ENCODE measurements at regions of chr5 and their contacts with region 1.

Region 1: DNA sequence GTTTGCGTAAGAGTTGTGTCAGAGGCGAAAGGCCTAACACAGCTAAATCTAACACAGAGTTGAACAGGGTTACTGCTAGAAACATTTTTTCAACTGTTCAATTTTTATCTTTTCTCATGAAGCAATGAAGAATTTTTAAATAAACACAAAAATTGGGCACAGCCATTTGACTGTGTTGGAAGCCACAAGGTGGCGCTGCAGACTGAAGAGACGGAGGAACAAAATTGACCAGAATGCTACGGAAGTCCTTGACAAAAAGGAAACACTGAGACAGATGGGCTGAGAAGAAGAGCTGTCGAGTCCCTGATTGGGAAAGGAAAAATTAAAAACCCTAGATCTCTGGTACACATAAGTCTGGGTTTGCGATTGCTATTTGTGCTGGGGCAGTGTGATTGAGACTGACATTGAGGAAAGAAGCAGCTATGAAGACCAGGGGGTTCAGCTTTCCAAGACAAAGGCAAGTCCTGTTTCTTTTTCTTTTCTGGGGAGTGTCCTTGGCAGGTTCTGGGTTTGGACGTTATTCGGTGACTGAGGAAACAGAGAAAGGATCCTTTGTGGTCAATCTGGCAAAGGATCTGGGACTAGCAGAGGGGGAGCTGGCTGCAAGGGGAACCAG is at the start of gene PCDHB9:
- DNase-seq: peak in 1 of 2 experiments; percentile 80
- H3K4me3 ChIP-seq: peak within 1 kb of the TSS in 2 of 4 experiments; percentile 11 to 27; a peak in 1 of 8 replicates
- H3K27ac ChIP-seq: no peak within 1 kb of the TSS
- H3K4me1 ChIP-seq: 0 out of 7 replicates have a peak, but pooled peaks cover 0 to 2% (median 0%) of the 10 kb centered on the region in 4 experiments
- H3K27me3 ChIP-seq: no peaks in the 10 kb centered on the region
- CTCF ChIP-seq: peak; percentile 53 to 83 (median 81)
- EP300 ChIP-seq: no peak
- POLR2A ChIP-seq: no peak
- RAD21 ChIP-seq: peak; percentile 52 to 61
- total RNA-seq, gene PCDHB9: 1.6 and 3.8 TPM in 2 replicates

Region 2: DNA sequence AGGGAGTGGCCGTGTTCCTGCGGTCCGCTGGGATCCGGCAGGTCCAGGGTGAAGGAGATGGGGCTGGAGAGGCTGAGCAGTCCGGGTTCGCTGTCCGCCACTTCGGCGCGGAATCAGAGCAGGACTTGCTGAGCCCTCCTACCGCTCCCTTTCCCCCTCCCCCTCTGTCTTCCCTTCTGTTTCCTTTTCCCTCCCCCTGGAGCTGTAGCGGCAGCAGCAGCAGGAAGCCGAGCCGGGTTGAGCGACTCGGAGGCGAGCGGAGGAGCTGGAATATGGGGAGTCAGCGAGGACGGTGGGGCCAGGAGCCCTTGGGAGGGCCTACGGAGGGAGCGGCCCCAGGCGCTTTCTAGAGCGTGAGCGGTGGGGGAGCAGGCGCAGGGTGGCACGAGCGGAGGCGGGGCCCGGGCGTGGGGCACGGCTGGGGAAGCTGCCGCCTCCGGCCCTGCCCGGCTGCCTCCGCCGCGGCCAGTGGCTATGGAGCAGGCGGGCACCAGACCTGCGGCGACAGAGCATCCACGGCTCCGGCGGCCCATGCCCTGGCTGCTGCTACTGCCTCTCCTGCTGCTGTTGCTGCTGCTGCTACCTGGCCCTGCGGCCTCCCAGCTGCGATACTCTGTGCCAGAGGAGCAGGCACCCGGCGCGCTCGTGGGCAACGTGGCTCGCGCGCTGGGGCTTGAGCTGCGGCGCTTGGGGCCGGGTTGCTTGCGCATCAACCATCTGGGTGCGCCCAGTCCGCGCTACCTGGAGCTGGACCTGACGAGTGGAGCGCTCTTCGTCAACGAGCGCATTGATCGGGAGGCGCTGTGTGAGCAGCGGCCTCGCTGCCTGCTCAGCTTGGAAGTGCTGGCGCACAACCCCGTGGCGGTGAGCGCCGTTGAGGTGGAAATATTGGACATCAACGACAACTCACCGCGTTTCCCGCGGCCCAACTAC is 220.4 kb before region 1 on chr5 and contains the start of gene PCDHAC2:
- CTCF ChIA-PET with region 1: no interaction called
- POLR2A ChIA-PET with region 1: no interaction called
- DNase-seq: peak in 1 of 2 experiments; percentile 83
- H3K4me3 ChIP-seq: peak within 1 kb of the TSS; percentile 76 to 96 (median 92)
- H3K27ac ChIP-seq: no peak within 1 kb of the TSS
- H3K4me1 ChIP-seq: peaks cover 2 to 15% (median 7%) of the 10 kb centered on the region in 4 experiments; a peak in 5 of 7 replicates
- H3K27me3 ChIP-seq: peaks cover 2 to 27% (median 20%) of the 10 kb centered on the region in 4 experiments
- CTCF ChIP-seq: 0 out of 4 replicates have a peak, but pooled peaks of 1 of the 3 experiments have one; percentile 9
- EP300 ChIP-seq: peak in 1 of 2 experiments; percentile 44; a peak in 1 of 3 replicates
- POLR2A ChIP-seq: peak in 1 of 2 experiments; percentile 15; a peak in 1 of 3 replicates
- RAD21 ChIP-seq: 0 out of 4 replicates have a peak, but pooled peaks of 1 of the 2 experiments have one; percentile 3
- total RNA-seq, gene PCDHAC2: 3.7 and 4.9 TPM in 2 replicates

Region 3: DNA sequence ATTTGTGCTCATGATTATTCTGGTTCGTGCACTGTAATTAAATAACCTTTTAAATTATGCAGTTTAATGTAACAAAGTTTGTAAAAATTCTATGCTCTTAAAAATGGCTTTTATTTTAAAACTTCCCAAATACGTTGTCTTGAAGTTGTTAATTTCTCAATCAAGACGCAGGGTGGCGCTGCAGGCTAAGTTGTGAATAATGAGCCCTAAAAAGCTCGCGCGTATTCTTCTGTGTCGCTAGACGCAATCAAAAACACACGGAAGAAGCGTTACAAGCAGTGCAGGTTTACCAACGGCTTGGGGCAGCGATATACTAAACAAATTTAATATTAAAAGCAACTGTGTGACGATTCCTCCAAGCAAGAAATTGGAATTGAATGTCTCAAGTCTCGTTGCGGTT is 65.4 kb before region 1 on chr5 and contains the start of gene PCDHB4:
- CTCF ChIA-PET with region 1: interaction called, 22 read pairs
- POLR2A ChIA-PET with region 1: no interaction called
- DNase-seq: no peak
- H3K4me3 ChIP-seq: no peak within 1 kb of the TSS; a peak in 2 of 8 replicates
- H3K27ac ChIP-seq: no peak within 1 kb of the TSS
- H3K4me1 ChIP-seq: no peaks in the 10 kb centered on the region
- H3K27me3 ChIP-seq: no peaks in the 10 kb centered on the region
- CTCF ChIP-seq: peak; percentile 10 to 70 (median 63); a peak in 3 of 4 replicates
- EP300 ChIP-seq: no peak
- POLR2A ChIP-seq: no peak
- RAD21 ChIP-seq: peak; percentile 77 to 78
- total RNA-seq, gene PCDHB4: 1.4 and 1.5 TPM in 2 replicates

Region 4: DNA sequence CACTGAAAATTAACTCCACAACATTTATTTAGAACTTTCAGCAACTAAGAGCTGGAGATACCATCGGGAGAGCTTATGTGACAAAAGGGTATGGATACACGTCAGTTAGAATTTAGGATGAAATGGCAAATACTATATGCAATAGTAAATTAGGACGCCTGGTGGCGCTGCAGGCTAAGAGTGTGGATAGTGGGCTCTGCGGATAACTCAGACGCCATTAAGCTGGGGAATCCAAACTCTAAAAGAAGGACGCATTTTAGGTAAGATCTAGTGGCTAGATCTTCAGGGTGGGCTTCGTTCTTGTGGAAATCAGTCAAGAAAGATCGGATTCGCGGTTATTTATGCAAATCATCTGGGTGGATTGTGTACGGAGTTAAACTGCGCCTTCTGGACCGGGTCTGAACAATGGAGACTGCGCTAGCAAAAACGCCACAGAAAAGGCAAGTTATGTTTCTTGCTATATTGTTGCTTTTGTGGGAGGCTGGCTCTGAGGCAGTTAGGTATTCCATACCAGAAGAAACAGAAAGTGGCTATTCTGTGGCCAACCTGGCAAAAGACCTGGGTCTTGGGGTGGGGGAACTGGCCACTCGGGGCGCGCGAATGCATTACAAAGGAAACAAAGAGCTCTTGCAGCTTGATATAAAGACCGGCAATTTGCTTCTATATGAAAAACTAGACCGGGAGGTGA is 51.8 kb before region 1 on chr5 and contains the start of gene PCDHB5:
- CTCF ChIA-PET with region 1: interaction called, 21 read pairs
- POLR2A ChIA-PET with region 1: interaction called, 7 read pairs
- DNase-seq: peak in 1 of 2 experiments; percentile 86
- H3K4me3 ChIP-seq: peak within 1 kb of the TSS; percentile 60 to 98 (median 64)
- H3K27ac ChIP-seq: peak within 1 kb of the TSS; percentile 70
- H3K4me1 ChIP-seq: no peaks in the 10 kb centered on the region
- H3K27me3 ChIP-seq: no peaks in the 10 kb centered on the region
- CTCF ChIP-seq: peak; percentile 43 to 77 (median 72)
- EP300 ChIP-seq: no peak
- POLR2A ChIP-seq: peak in 1 of 2 experiments; percentile 49; a peak in 1 of 3 replicates
- RAD21 ChIP-seq: peak; percentile 77 to 79
- total RNA-seq, gene PCDHB5: 2.4 and 2.8 TPM in 2 replicates

Region 5: DNA sequence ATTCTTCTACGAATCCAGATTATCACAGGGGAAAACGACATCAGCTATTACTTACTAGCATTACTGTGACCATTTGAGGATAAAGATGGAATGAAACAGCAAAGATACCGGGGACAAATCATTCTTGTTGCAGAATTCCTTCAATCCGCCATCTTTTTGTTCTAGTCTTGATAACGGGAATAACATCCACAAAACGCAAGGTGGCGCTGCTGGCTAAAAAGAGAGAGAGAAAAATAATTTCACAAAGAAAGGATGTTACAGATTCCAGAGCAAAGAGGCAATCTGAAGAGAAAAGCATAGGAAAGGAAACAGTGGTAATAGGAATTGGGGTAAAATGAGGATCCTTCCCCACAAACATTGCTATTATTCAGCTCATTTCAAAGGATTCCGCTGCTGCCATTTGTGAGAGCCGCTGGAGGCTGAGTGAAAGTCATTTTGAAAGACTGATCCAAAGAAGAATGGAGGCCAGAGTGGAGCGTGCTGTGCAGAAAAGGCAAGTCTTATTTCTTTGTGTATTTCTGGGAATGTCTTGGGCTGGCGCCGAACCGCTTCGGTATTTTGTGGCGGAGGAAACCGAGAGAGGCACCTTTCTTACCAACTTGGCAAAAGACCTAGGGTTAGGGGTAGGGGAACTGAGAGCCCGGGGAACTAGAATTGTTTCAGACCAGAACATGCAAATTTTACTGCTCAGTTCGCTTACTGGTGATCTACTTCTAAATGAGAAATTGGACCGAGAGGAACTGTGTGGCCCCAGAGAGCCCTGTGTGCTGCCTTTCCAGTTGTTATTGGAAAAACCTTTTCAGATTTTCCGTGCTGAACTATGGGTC is 14.4 kb before region 1 on chr5 and contains the start of gene PCDHB7:
- CTCF ChIA-PET with region 1: interaction called, 21 read pairs
- POLR2A ChIA-PET with region 1: no interaction called
- DNase-seq: no peak
- H3K4me3 ChIP-seq: no peak within 1 kb of the TSS
- H3K27ac ChIP-seq: no peak within 1 kb of the TSS
- H3K4me1 ChIP-seq: no peaks in the 10 kb centered on the region
- H3K27me3 ChIP-seq: no peaks in the 10 kb centered on the region
- CTCF ChIP-seq: peak in 2 of 3 experiments; percentile 60 to 70; a peak in 3 of 4 replicates
- EP300 ChIP-seq: no peak
- POLR2A ChIP-seq: no peak
- RAD21 ChIP-seq: peak; percentile 69 to 71
- total RNA-seq, gene PCDHB7: 0.19 and 0.25 TPM in 2 replicates

Region 6: DNA sequence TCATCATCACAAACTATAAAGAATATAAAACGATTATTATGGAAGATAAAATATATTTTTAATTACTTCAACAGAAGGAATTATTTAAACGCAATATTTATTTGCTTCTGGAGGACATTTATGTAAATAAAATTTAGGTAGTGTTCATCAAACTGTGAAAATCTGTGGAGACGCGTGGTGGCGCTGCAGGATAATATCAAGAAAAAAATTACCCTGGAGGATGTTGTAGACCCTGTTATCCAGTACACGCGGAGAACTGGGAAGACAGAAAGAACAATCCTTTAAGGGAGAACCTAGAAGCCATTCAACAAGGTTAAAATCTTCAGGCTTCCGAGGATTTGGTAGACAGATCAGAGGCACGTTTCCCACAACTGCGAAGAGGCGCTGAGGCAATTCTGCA is 21.5 kb after region 1 on chr5 and contains the start of gene PCDHB12:
- CTCF ChIA-PET with region 1: interaction called, 28 read pairs
- POLR2A ChIA-PET with region 1: no interaction called
- DNase-seq: no peak
- H3K4me3 ChIP-seq: peak within 1 kb of the TSS in 2 of 4 experiments; percentile 10 to 34; a peak in 2 of 8 replicates
- H3K27ac ChIP-seq: no peak within 1 kb of the TSS
- H3K4me1 ChIP-seq: no peaks in the 10 kb centered on the region
- H3K27me3 ChIP-seq: no peaks in the 10 kb centered on the region
- CTCF ChIP-seq: peak in 2 of 3 experiments; percentile 11 to 48; a peak in 3 of 4 replicates
- EP300 ChIP-seq: no peak
- POLR2A ChIP-seq: no peak
- RAD21 ChIP-seq: peak; percentile 42 to 45
- total RNA-seq, gene PCDHB12: 2.0 and 3.0 TPM in 2 replicates